ENCODE measurements at regions of chr12 and their contacts with region 1.

Region 1: GRCh38 chr12:93677195-93678064 is at the start of gene CRADD:
- DNase-seq: peak; percentile 96
- H3K4me3 ChIP-seq: peak within 1 kb of the TSS; percentile 66 to 80 (median 78)
- H3K27ac ChIP-seq: peak within 1 kb of the TSS; percentile 93
- H3K4me1 ChIP-seq: peaks cover 10% of the 10 kb centered on the region
- H3K27me3 ChIP-seq: no peaks in the 10 kb centered on the region
- CTCF ChIP-seq: no peak
- total RNA-seq, gene CRADD: 13.3 to 14.2 TPM

Region 2: DNA sequence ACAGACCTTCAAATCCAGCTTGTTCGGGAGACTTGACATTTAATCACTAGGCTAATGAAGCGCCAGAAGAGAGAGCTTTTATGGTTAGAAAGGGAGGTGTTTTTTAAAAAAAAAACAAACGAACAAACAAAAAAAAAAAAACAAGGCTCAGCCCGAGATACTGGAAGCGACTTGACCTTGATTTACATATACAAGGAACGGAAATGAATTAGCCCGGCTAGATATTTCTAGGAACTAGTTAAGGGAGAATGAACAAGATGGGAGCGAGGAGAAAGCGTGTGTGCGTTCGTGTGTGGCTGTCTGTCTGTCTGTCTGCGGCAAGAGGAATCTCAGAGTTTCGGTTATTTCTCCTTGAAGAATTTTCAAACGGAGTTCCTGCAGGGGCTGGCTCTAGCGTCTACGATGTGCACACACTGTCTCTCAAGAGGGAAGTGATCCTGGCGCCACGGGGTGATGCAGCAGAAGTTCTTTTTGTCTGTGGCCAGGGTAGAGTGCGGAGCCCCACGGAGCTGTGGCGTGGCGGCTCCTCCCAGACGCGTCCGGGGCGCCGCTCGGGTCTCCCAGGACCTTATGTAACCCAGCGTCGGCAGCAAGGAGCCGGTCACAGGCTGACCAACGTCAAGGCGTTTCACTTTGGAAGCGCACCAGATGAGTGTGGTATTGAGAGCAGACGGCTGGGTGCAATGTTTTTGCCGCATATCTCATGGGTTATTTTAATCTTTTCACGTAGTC is 86.1 kb before region 1 on chr12:
- CTCF ChIA-PET with region 1: no interaction called
- dilution Hi-C with region 1: no loop called
- in situ Hi-C with region 1: no loop called
- intact Hi-C with region 1: loop called (anchors 5 kb)
- DNase-seq: peak; percentile 76
- H3K4me3 ChIP-seq: peak overlapping the region; percentile 66 to 99 (median 68)
- H3K27ac ChIP-seq: peak overlapping the region; percentile 87
- H3K4me1 ChIP-seq: no peaks in the 10 kb centered on the region
- H3K27me3 ChIP-seq: no peaks in the 10 kb centered on the region
- CTCF ChIP-seq: no peak

Region 3: GRCh38 chr12:93624595-93625294 is 52.7 kb before region 1 on chr12:
- CTCF ChIA-PET with region 1: no interaction called
- dilution Hi-C with region 1: no loop called
- in situ Hi-C with region 1: no loop called
- intact Hi-C with region 1: loop called (anchors 1 kb)
- DNase-seq: peak; percentile 97
- H3K4me3 ChIP-seq: peak overlapping the region in 2 of 3 experiments; percentile 11 to 21
- H3K27ac ChIP-seq: peak overlapping the region; percentile 99
- H3K4me1 ChIP-seq: peaks cover 18% of the 10 kb centered on the region
- H3K27me3 ChIP-seq: no peaks in the 10 kb centered on the region
- CTCF ChIP-seq: no peak

Region 4: GRCh38 chr12:93707836-93708235 is 30.4 kb after region 1 on chr12:
- CTCF ChIA-PET with region 1: no interaction called
- dilution Hi-C with region 1: no loop called
- in situ Hi-C with region 1: no loop called
- intact Hi-C with region 1: loop called (anchors 1 kb)
- DNase-seq: peak; percentile 61
- H3K4me3 ChIP-seq: no peak overlapping the region
- H3K27ac ChIP-seq: no peak overlapping the region
- H3K4me1 ChIP-seq: no peaks in the 10 kb centered on the region
- H3K27me3 ChIP-seq: no peaks in the 10 kb centered on the region
- CTCF ChIP-seq: no peak

Region 5: GRCh38 chr12:93742110-93742934 is 64.9 kb after region 1 on chr12:
- CTCF ChIA-PET with region 1: no interaction called
- dilution Hi-C with region 1: no loop called
- in situ Hi-C with region 1: no loop called
- intact Hi-C with region 1: loop called (anchors 1 kb)
- DNase-seq: peak; percentile 65
- H3K4me3 ChIP-seq: peak overlapping the region; percentile 55 to 74 (median 60)
- H3K27ac ChIP-seq: peak overlapping the region; percentile 81
- H3K4me1 ChIP-seq: peaks cover 16% of the 10 kb centered on the region
- H3K27me3 ChIP-seq: no peaks in the 10 kb centered on the region
- CTCF ChIP-seq: peak; percentile 12 to 48

Region 6: DNA sequence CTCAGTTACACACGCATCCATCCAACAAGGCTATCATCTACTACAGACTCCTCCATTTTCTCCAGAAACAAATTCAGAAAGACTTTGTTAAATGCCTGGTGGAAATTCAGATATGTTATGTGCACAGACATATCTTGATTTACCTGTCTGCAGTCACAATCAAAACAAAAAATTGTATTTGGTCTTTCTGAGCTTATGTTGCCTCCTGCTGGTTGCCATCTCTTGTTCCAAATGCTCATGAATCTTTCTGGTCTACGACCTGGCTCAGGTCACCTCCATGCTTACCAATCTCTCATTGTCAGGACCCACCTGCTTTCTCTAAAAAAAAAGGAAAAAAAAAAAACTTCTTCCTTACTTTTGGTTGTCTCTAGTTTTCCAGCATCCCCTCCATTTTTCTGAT is 301.8 kb after region 1 on chr12:
- CTCF ChIA-PET with region 1: no interaction called
- dilution Hi-C with region 1: no loop called
- in situ Hi-C with region 1: no loop called
- intact Hi-C with region 1: loop called (anchors 10 kb)
- DNase-seq: peak; percentile 24
- H3K4me3 ChIP-seq: no peak overlapping the region
- H3K27ac ChIP-seq: no peak overlapping the region
- H3K4me1 ChIP-seq: peaks cover 5% of the 10 kb centered on the region
- H3K27me3 ChIP-seq: no peaks in the 10 kb centered on the region
- CTCF ChIP-seq: peak; percentile 27 to 50

Measured in mammary epithelial cell (primary cell).